Naive thymus-derived CD4-positive, alpha-beta T cell (primary cell): ENCODE measurements at regions of chr12 and their contacts with region 1.

Region 1: GRCh38 chr12:44774815-44775411 is 101.2 kb downstream of the NELL2 start:
- DNase-seq: peak; percentile 12 to 61 (median 47)
- ATAC-seq: peak; percentile 57
- H3K4me3 ChIP-seq: no peak overlapping the region
- H3K4me3 Mint-ChIP-seq: peak overlapping the region in 1 of 10 donors; percentile 64
- H3K27ac ChIP-seq: no peak overlapping the region
- H3K27ac Mint-ChIP-seq: peak overlapping the region in 2 of 9 donors; percentile 54 to 85
- H3K4me1 ChIP-seq: no peaks in the 10 kb centered on the region
- H3K4me1 Mint-ChIP-seq: peaks cover 0 to 9% (median 4%) of the 10 kb centered on the region in 7 donors
- H3K27me3 ChIP-seq: no peaks in the 10 kb centered on the region
- H3K27me3 Mint-ChIP-seq: peaks cover 0 to 3% (median 0%) of the 10 kb centered on the region in 5 donors

Region 2: GRCh38 chr12:44015335-44015941 is 759.5 kb before region 1 on chr12:
- CTCF ChIA-PET with region 1: interaction called, 5 read pairs
- POLR2A ChIA-PET with region 1: no interaction called
- intact Hi-C with region 1: loop called in 1 of 2 experiments (anchors 10 kb)
- DNase-seq: peak in 7 of 9 donors; percentile 14 to 56 (median 40)
- ATAC-seq: peak; percentile 53
- H3K4me3 ChIP-seq: no peak overlapping the region
- H3K4me3 Mint-ChIP-seq: no peak overlapping the region
- H3K27ac ChIP-seq: no peak overlapping the region
- H3K27ac Mint-ChIP-seq: no peak overlapping the region
- H3K4me1 ChIP-seq: no peaks in the 10 kb centered on the region
- H3K4me1 Mint-ChIP-seq: peaks cover 0 to 3% (median 0%) of the 10 kb centered on the region in 7 donors
- H3K27me3 ChIP-seq: no peaks in the 10 kb centered on the region
- H3K27me3 Mint-ChIP-seq: peaks cover 0 to 3% (median 0%) of the 10 kb centered on the region in 5 donors

Region 3: GRCh38 chr12:44674875-44675274 is 100.0 kb before region 1 on chr12:
- CTCF ChIA-PET with region 1: no interaction called
- POLR2A ChIA-PET with region 1: no interaction called
- intact Hi-C with region 1: no loop called
- DNase-seq: no peak
- ATAC-seq: no peak
- H3K4me3 ChIP-seq: no peak overlapping the region
- H3K4me3 Mint-ChIP-seq: no peak overlapping the region
- H3K27ac ChIP-seq: no peak overlapping the region
- H3K27ac Mint-ChIP-seq: no peak overlapping the region
- H3K4me1 ChIP-seq: no peaks in the 10 kb centered on the region
- H3K4me1 Mint-ChIP-seq: no peaks in the 10 kb centered on the region
- H3K27me3 ChIP-seq: no peaks in the 10 kb centered on the region
- H3K27me3 Mint-ChIP-seq: no peaks in the 10 kb centered on the region

Region 4: GRCh38 chr12:44788731-44789130 is 13.8 kb after region 1 on chr12:
- CTCF ChIA-PET with region 1: no interaction called
- POLR2A ChIA-PET with region 1: no interaction called
- intact Hi-C with region 1: loop called in 1 of 2 experiments (anchors 2 kb)
- DNase-seq: no peak
- ATAC-seq: no peak
- H3K4me3 ChIP-seq: no peak overlapping the region
- H3K4me3 Mint-ChIP-seq: no peak overlapping the region
- H3K27ac ChIP-seq: no peak overlapping the region
- H3K27ac Mint-ChIP-seq: peak overlapping the region in 3 of 9 donors; percentile 8 to 72 (median 33)
- H3K4me1 ChIP-seq: no peaks in the 10 kb centered on the region
- H3K4me1 Mint-ChIP-seq: peaks cover 0 to 78% (median 55%) of the 10 kb centered on the region in 7 donors
- H3K27me3 ChIP-seq: no peaks in the 10 kb centered on the region
- H3K27me3 Mint-ChIP-seq: no peaks in the 10 kb centered on the region